HCT116 (cell line): ENCODE measurements at regions of chr18 and their contacts with region 1.

Region 1: GRCh38 chr18:21038201-21038600 is 73.4 kb downstream of the ROCK1 start:
- DNase-seq: no peak
- ATAC-seq: no peak
- H3K4me3 ChIP-seq: no peak overlapping the region
- H3K27ac ChIP-seq: no peak overlapping the region
- H3K4me1 ChIP-seq: no peaks in the 10 kb centered on the region
- H3K27me3 ChIP-seq: no peaks in the 10 kb centered on the region
- CTCF ChIP-seq: no peak
- POLR2A ChIP-seq: no peak
- RAD21 ChIP-seq: no peak

Region 2: GRCh38 chr18:20988726-20989125 is 49.5 kb before region 1 on chr18:
- CTCF ChIA-PET with region 1: no interaction called
- POLR2A ChIA-PET with region 1: no interaction called
- RAD21 ChIA-PET with region 1: no interaction called
- intact Hi-C with region 1: loop called (anchors 5 kb)
- DNase-seq: no peak
- ATAC-seq: no peak
- H3K4me3 ChIP-seq: no peak overlapping the region
- H3K27ac ChIP-seq: no peak overlapping the region
- H3K4me1 ChIP-seq: no peaks in the 10 kb centered on the region
- H3K27me3 ChIP-seq: no peaks in the 10 kb centered on the region
- CTCF ChIP-seq: no peak
- POLR2A ChIP-seq: no peak
- RAD21 ChIP-seq: no peak